ENCODE measurements at regions of chr5 and their contacts with region 1.

Region 1: GRCh38 chr5:102911973-102912372 is 156.9 kb downstream of the PAM start:
- DNase-seq: peak; percentile 92
- ATAC-seq: peak; percentile 51
- H3K4me3 ChIP-seq: no peak overlapping the region
- H3K27ac ChIP-seq: peak overlapping the region; percentile 82
- H3K4me1 ChIP-seq: peaks cover 37% of the 10 kb centered on the region
- H3K27me3 ChIP-seq: no peaks in the 10 kb centered on the region
- CTCF ChIP-seq: no peak

Region 2: DNA sequence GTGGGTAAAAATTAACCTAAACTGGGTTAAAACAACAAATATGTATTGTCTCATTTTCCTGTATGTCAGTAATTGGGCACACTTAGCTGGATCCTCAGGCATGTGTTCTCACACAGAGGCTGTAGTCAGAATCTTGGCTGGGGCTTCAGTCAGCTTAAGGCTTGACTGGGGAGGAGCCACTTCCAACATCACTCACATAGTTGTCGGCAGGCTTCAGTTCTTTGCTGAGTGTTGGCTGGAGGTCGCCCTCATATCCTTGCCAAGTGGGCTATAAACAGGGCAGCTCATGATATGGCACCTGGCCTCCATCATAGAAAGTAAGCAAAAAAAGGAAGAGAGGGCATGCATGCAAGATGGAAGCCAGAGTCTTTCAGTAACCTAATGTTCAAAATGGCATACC is 35.0 kb after region 1 on chr5:
- CTCF ChIA-PET with region 1: no interaction called
- POLR2A ChIA-PET with region 1: no interaction called
- intact Hi-C with region 1: no loop called
- DNase-seq: no peak
- ATAC-seq: no peak
- H3K4me3 ChIP-seq: no peak overlapping the region
- H3K27ac ChIP-seq: no peak overlapping the region
- H3K4me1 ChIP-seq: no peaks in the 10 kb centered on the region
- H3K27me3 ChIP-seq: no peaks in the 10 kb centered on the region
- CTCF ChIP-seq: no peak

Region 3: DNA sequence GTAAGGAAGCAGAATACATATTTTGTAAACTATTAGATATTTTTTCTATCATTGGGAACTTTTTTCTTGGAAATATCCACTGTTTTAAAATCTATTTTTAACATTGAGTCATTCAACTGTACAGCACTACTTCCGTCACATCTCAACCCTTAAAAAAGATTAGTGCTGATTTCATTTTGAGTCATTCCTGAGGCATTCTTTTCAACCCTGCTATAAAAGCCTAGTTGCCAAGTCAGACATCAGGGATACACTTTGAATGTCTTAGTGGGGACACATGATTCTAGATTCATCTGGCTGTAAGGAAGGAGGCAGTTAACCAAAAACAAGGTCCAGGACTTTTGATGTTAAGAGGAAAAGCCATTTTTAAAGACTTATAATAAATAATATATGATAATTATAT is 47.1 kb after region 1 on chr5:
- CTCF ChIA-PET with region 1: no interaction called
- POLR2A ChIA-PET with region 1: no interaction called
- intact Hi-C with region 1: loop called (anchors 1 kb)
- DNase-seq: peak; percentile 96
- ATAC-seq: peak; percentile 98
- H3K4me3 ChIP-seq: peak overlapping the region; percentile 19; the same call in 1 of the 2 replicates
- H3K27ac ChIP-seq: peak overlapping the region; percentile 99
- H3K4me1 ChIP-seq: peaks cover 18% of the 10 kb centered on the region
- H3K27me3 ChIP-seq: no peaks in the 10 kb centered on the region
- CTCF ChIP-seq: no peak

Region 4: DNA sequence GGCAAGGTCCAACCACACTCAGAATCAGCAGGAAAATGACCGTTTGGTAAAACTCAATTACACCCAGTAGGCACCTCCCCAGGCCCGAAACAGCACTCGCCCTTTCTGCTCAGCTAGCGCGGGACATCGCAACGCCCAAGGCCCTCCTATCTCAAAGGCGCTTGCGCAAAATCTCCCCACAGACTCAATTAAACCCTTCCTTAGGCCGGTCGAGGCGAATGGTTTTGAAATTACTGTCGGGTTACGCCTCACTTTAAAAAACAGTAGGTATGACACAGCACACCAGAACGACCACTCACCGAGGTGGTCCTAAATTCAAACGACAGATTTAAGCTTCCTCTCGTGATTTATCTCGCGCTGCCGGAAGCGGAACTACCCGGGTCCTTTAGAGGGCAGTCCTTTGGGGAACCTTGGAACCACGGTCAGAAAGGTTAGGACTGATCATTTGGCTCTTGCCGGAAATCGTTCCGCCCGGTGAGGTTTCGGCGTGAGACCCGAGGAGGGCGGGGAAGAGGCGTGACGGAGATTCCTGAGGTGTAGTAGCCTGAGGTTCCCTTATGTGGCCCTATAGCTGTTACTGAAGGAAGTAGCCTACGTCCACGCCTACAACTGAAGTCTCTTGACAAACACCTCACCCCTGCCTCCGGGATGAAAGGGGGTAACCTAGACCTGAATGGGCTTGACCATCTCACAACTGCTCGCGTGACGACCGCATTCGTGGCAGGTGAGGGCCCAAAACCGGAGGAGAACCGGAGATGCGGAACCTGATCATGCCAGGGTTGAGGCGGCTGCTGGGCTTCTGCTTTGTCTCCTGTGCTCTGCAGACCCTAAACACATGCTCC is 208.0 kb after region 1 on chr5 and contains the starts of genes GIN1 and PPIP5K2:
- CTCF ChIA-PET with region 1: no interaction called
- POLR2A ChIA-PET with region 1: no interaction called
- intact Hi-C with region 1: no loop called
- DNase-seq: peak; percentile 100
- ATAC-seq: peak; percentile 89
- H3K4me3 ChIP-seq: peak within 1 kb of the TSS; percentile 90
- H3K27ac ChIP-seq: peak within 1 kb of the TSS; percentile 92
- H3K4me1 ChIP-seq: peaks cover 32% of the 10 kb centered on the region
- H3K27me3 ChIP-seq: no peaks in the 10 kb centered on the region
- CTCF ChIP-seq: no peak
- total RNA-seq, gene GIN1: 3.9 and 6.2 TPM in 2 replicates
- total RNA-seq, gene PPIP5K2: 40.4 and 52.2 TPM in 2 replicates

Measured in PC-3 (cell line).